Left ventricle myocardium inferior (tissue), 1 donor: ENCODE measurements at regions of chrX and their contacts with region 1.

Region 1: DNA sequence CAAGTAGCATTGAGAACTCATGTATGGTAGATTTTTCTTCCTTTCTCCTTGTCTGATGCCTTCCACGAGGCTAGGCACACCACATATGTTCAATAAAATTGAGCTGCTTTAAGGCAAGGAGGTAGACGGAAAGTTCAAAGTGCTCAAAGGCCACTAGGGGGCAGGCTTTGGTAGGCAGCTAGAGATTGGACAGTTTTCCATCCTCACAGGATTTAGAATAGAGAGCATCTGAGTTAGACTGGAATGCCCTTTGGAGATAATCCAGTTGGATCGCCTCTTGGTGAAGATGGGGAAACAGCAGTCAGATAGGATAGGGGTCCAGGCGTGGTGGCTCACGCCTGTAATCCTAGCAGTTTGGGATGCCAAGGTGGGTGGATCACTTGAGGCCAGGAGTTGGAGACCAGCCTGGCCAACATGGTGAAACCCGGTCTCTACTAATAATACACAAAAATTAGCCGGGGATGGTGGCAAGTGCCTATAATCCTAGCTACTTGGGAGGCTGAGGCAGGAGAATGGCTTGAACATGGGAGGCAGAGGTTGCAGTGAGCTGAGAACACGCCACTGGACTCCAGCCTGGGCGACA is 30.4 kb downstream of the ELF4 start:
- DNase-seq: no peak
- H3K4me3 ChIP-seq: no peak overlapping the region
- H3K27ac ChIP-seq: no peak overlapping the region
- H3K4me1 ChIP-seq: peaks cover 35% of the 10 kb centered on the region
- H3K27me3 ChIP-seq: no peaks in the 10 kb centered on the region
- CTCF ChIP-seq: peak; percentile 72

Region 2: DNA sequence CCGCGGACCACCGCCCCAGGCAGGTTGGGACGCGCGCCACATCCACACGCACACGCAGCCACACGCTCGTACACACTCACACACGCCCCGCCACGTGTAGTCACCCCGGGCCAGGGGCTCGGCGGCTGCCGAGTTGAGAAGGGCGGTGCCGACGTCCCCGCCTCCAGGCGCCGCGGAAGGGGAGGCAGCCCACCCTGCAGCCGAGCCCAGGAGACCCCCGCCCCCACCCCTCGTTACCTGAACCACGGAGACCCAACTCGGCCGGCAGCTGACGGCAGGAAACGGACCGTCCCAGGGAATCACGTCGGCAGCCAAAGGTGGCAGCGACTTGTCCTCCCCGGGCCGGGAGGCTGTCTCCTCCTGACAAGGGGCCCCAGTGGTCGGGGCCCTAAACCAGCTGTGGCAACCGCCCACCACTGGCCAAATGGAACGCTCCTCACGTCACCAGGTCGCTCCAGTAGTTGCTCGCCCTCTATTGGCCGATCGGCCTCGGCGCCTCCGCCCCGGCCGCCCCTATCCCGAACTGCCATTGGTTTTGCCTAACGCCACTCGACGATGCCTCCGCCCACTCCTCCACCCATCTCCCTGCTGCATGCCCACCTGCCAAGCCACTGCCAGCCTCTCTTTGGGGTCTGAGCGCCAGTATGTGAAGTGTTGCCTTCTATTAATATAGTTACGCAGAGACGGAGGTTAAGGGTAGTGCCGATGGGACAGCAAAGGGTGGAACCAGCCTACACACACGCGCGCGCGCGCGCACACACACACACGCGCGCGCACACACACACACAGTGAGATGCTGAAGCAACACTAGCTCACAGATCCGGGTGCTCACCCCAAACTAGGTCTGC is 236.2 kb before region 1 on chrX and contains the start of gene ZDHHC9:
- intact Hi-C with region 1: no loop called
- DNase-seq: peak; percentile 88
- H3K4me3 ChIP-seq: peak within 1 kb of the TSS; percentile 79
- H3K27ac ChIP-seq: peak within 1 kb of the TSS; percentile 78
- H3K4me1 ChIP-seq: peaks cover 18% of the 10 kb centered on the region
- H3K27me3 ChIP-seq: no peaks in the 10 kb centered on the region
- CTCF ChIP-seq: peak; percentile 30
- total RNA-seq, gene ZDHHC9: 11.9 TPM

Region 3: GRCh38 chrX:130028196-130028595 is 51.7 kb before region 1 on chrX:
- intact Hi-C with region 1: no loop called
- DNase-seq: peak; percentile 35
- H3K4me3 ChIP-seq: no peak overlapping the region
- H3K27ac ChIP-seq: no peak overlapping the region
- H3K4me1 ChIP-seq: peaks cover 4% of the 10 kb centered on the region
- H3K27me3 ChIP-seq: no peaks in the 10 kb centered on the region
- CTCF ChIP-seq: peak; percentile 74

Region 4: GRCh38 chrX:130120746-130121504 is 41.0 kb after region 1 on chrX:
- intact Hi-C with region 1: loop called (anchors 5 kb)
- DNase-seq: peak; percentile 69
- H3K4me3 ChIP-seq: peak overlapping the region; percentile 63
- H3K27ac ChIP-seq: peak overlapping the region; percentile 78
- H3K4me1 ChIP-seq: peaks cover 26% of the 10 kb centered on the region
- H3K27me3 ChIP-seq: no peaks in the 10 kb centered on the region
- CTCF ChIP-seq: peak; percentile 75

Region 5: GRCh38 chrX:130190801-130191200 is 110.9 kb after region 1 on chrX:
- intact Hi-C with region 1: loop called (anchors 5 kb)
- DNase-seq: no peak
- H3K4me3 ChIP-seq: no peak overlapping the region
- H3K27ac ChIP-seq: no peak overlapping the region
- H3K4me1 ChIP-seq: no peaks in the 10 kb centered on the region
- H3K27me3 ChIP-seq: no peaks in the 10 kb centered on the region
- CTCF ChIP-seq: no peak